Heart right ventricle (tissue), 16 donors: ENCODE measurements at regions of chr11 and their contacts with region 1.

Region 1: GRCh38 chr11:80041136-80042000 is 600.5 kb upstream of the TENM4 start:
- DNase-seq: no peak
- ATAC-seq: peak in 1 of 8 donors; percentile 22
- H3K4me3 ChIP-seq: no peak overlapping the region
- H3K27ac ChIP-seq: no peak overlapping the region
- H3K4me1 ChIP-seq: no peaks in the 10 kb centered on the region
- H3K27me3 ChIP-seq: peaks cover 0 to 4% (median 0%) of the 10 kb centered on the region in 7 donors
- CTCF ChIP-seq: no peak

Region 2: GRCh38 chr11:79963856-79964645 is 77.3 kb before region 1 on chr11:
- intact Hi-C with region 1: no loop called
- DNase-seq: no peak
- ATAC-seq: no peak
- H3K4me3 ChIP-seq: no peak overlapping the region
- H3K27ac ChIP-seq: no peak overlapping the region
- H3K4me1 ChIP-seq: no peaks in the 10 kb centered on the region
- H3K27me3 ChIP-seq: no peaks in the 10 kb centered on the region
- CTCF ChIP-seq: no peak

Region 3: DNA sequence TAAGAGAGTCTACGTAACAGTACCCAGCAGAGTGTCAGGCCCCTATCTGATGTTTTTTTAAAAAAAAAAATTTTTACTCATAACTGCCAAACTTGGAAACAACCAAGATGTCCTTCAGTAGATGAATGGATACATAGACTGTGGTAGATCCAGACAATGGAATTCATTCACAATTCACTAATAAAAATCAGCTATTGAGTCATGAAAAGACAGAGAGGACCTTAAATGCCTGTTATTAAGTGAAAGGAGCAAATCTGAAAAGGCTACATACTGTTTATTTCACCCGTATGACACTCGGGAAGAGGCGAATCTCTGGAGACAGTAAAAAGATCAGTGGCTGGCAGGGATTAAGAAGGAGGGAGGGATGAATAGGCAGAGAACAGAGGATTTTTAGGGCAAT is 59.2 kb before region 1 on chr11:
- intact Hi-C with region 1: loop called in 1 of 10 experiments (anchors 10 kb)
- DNase-seq: no peak
- ATAC-seq: no peak
- H3K4me3 ChIP-seq: no peak overlapping the region
- H3K27ac ChIP-seq: no peak overlapping the region
- H3K4me1 ChIP-seq: no peaks in the 10 kb centered on the region
- H3K27me3 ChIP-seq: no peaks in the 10 kb centered on the region
- CTCF ChIP-seq: no peak